Ascending aorta (tissue), 2 donors: ENCODE measurements at regions of chr9 and their contacts with region 1.

Region 1: DNA sequence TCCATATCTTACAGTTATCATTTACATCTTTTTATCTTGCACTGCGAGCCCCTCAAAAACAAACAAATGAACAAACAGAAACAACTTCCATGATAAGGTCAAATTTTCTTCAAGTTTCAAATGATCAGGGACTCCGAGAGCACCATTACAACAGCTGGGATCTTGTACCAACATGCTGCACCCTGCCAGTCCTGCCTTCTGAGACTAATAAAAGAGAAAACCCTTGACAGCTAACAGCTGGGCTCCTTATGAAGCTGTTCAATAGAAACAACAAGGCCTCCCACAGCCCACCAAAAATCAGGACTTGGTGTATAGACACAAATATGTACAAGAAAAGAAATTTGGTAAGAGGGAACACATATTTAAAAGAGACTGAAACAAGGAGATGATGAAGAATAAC is 985.3 kb upstream of the DMAC1 start:
- DNase-seq: no peak
- H3K4me3 ChIP-seq: peak overlapping the region in 1 of 2 donors; percentile 43
- H3K27ac ChIP-seq: peak overlapping the region; percentile 67 to 71
- H3K4me1 ChIP-seq: peaks cover 0 to 17% of the 10 kb centered on the region in 2 donors
- H3K27me3 ChIP-seq: no peaks in the 10 kb centered on the region
- CTCF ChIP-seq: no peak

Region 2: GRCh38 chr9:8684978-8685708 is 99.7 kb before region 1 on chr9:
- intact Hi-C with region 1: loop called (anchors 10 kb)
- DNase-seq: no peak
- H3K4me3 ChIP-seq: no peak overlapping the region
- H3K27ac ChIP-seq: no peak overlapping the region
- H3K4me1 ChIP-seq: no peaks in the 10 kb centered on the region
- H3K27me3 ChIP-seq: no peaks in the 10 kb centered on the region
- CTCF ChIP-seq: no peak

Region 3: GRCh38 chr9:8718121-8718725 is 66.6 kb before region 1 on chr9:
- intact Hi-C with region 1: loop called (anchors 1 kb)
- DNase-seq: no peak
- H3K4me3 ChIP-seq: peak overlapping the region; percentile 6 to 52
- H3K27ac ChIP-seq: peak overlapping the region; percentile 68 to 69
- H3K4me1 ChIP-seq: peaks cover 4% of the 10 kb centered on the region in 2 donors
- H3K27me3 ChIP-seq: no peaks in the 10 kb centered on the region
- CTCF ChIP-seq: no peak

Region 4: GRCh38 chr9:8857926-8858595 is 73.2 kb after region 1 on chr9:
- intact Hi-C with region 1: loop called (anchors 1 kb)
- DNase-seq: peak in 1 of 2 donors; percentile 78
- H3K4me3 ChIP-seq: peak overlapping the region; percentile 77 to 78
- H3K27ac ChIP-seq: peak overlapping the region; percentile 76 to 83
- H3K4me1 ChIP-seq: peaks cover 0 to 4% of the 10 kb centered on the region in 2 donors
- H3K27me3 ChIP-seq: no peaks in the 10 kb centered on the region
- CTCF ChIP-seq: no peak